GM13977 (cell line): ENCODE measurements at regions of chr5 and their contacts with region 1.

Region 1: GRCh38 chr5:55691265-55692105 is 20.6 kb downstream of the SLC38A9 start:
- DNase-seq: peak; percentile 57
- CTCF ChIP-seq: peak; percentile 47

Region 2: GRCh38 chr5:55324815-55325418 is 366.6 kb before region 1 on chr5:
- in situ Hi-C with region 1: no loop called
- DNase-seq: no peak
- CTCF ChIP-seq: peak; percentile 71

Region 3: GRCh38 chr5:55407059-55407684 is 284.3 kb before region 1 on chr5:
- in situ Hi-C with region 1: loop called (anchors 25 kb)
- DNase-seq: no peak
- CTCF ChIP-seq: peak; percentile 55

Region 4: DNA sequence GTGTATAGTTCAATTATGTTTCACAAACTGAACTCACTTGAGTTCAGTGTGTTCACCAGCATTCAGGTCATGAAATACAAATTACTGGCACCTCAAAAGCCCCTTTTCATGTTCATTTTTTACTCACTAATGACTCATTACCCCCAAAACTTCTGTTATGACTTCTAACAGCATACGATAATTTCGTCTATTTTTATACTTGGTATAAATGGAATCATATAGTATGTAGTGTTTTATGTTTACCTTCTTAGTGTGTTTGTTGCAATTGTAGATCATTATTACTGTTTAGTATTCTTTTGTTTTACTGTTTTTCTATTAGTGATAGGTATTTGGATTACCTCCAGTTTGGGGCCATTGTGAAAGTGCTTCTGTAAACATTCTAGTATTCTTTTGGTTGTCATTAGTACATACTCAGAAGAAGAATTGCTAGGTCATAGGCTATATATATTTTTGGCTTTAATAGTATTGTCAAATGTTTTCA is 79.7 kb after region 1 on chr5:
- in situ Hi-C with region 1: no loop called
- DNase-seq: peak; percentile 23
- CTCF ChIP-seq: no peak